Mucosa of descending colon (tissue), 3 donors: ENCODE measurements at regions of chr17 and their contacts with region 1.

Region 1: DNA sequence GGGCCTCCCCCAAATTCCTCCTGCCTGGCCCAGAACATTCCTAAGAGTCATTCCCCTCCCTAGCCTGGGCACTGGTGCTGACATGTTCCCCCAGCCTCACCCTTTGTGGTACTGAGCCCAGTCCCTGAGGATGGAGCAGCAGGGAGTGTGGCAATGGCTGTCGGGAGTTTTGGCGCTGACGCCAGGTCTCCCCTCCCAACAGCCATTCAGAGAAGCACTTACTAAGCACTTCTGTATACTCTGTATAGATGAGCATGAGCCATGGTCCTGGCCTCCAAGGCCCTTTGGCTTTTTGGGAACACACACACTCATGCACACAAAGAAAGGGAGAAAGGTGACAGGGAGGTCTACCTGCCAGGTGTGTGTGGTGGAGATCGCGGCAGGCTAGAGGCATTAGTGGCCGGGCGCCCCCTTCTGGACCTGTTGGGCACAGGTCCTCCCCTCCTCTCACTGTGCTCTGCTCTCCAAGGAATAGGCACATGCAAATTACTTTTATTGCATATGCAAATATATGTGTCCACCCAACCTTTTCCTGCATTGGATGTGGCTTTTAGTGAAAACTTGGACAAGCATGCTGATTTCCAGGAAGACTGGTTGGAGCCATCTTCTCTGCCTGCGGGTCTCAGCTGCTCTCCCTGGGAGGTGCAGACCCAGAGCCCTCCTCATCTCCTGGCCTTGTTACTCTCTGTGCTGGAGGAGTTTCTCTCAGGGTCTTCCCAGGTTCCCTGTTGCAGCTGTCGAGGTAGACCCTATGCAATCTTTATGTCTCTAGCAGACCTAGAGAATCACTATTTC is 17.4 kb upstream of the C17orf107 start:
- DNase-seq: peak; percentile 74 to 89 (median 83)
- ATAC-seq: peak; percentile 95
- H3K4me3 ChIP-seq: no peak overlapping the region
- H3K4me1 ChIP-seq: no peaks in the 10 kb centered on the region
- CTCF ChIP-seq: peak; percentile 74

Region 2: GRCh38 chr17:4709794-4710692 is 171.9 kb before region 1 on chr17 and contains the start of gene ARRB2:
- intact Hi-C with region 1: loop called in 1 of 2 experiments (anchors 10 kb)
- DNase-seq: peak; percentile 96 to 99 (median 98)
- ATAC-seq: peak; percentile 87
- H3K4me3 ChIP-seq: peak within 1 kb of the TSS; percentile 19
- H3K4me1 ChIP-seq: peaks cover 17% of the 10 kb centered on the region
- CTCF ChIP-seq: peak; percentile 30
- total RNA-seq, gene ARRB2: 29.7 to 56.5 (median 49.9) TPM

Region 3: GRCh38 chr17:4966844-4967538 is 85.0 kb after region 1 on chr17:
- intact Hi-C with region 1: no loop called
- DNase-seq: peak; percentile 96 to 99 (median 96)
- ATAC-seq: peak; percentile 88
- H3K4me3 ChIP-seq: peak overlapping the region; percentile 37
- H3K4me1 ChIP-seq: peaks cover 8% of the 10 kb centered on the region
- CTCF ChIP-seq: no peak